ENCODE measurements at regions of chr13 and their contacts with region 1.

Region 1: DNA sequence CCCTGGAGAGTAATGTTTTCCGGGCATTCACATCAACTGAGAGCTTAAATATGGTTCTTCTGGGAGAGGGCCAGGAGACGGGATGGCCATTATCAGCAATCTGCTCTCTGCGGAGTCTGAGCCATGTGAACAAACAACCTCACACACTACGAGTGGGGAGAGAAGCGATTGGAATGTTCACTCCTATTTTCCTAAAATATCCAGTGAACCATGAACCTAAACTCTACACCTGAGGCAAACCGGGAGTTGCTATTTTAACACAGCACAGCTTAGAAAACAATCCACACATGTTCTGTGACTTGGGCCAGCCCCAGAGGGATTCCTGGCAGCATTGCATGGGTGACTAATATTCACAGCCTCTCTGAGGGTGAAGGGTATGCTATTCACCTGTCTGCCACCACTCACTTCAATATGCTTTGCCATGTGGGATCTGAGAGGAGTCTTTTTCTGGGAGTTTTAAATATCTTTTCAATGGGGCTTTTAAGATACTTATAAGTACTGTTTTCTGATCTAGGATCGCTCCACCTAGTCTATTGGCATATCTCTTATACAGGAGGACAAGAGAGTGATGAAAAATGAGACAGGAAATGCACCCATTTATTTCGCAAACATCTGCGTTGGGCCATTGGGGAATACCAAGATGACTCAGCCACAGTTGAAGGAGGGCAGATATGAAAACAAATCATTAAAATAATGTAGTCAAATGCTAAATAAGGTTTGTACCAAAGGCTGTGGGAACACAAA is 72.6 kb upstream of the SERP2 start:
- DNase-seq: peak; percentile 75
- H3K4me3 ChIP-seq: no peak overlapping the region
- H3K27ac ChIP-seq: peak overlapping the region; percentile 68 to 90 (median 82)
- H3K4me1 ChIP-seq: peaks cover 0 to 77% (median 64%) of the 10 kb centered on the region in 4 donors
- H3K27me3 ChIP-seq: no peaks in the 10 kb centered on the region
- CTCF ChIP-seq: no peak
- EP300 ChIP-seq: peak in 2 of 4 donors; percentile 33 to 39
- POLR2A ChIP-seq: no peak

Region 2: GRCh38 chr13:44141725-44142539 is 159.1 kb before region 1 on chr13:
- intact Hi-C with region 1: loop called (anchors 5 kb)
- DNase-seq: peak; percentile 99
- H3K4me3 ChIP-seq: peak overlapping the region; percentile 43 to 57 (median 52)
- H3K27ac ChIP-seq: peak overlapping the region; percentile 86 to 95 (median 90)
- H3K4me1 ChIP-seq: peaks cover 0 to 17% (median 10%) of the 10 kb centered on the region in 4 donors
- H3K27me3 ChIP-seq: no peaks in the 10 kb centered on the region
- CTCF ChIP-seq: peak in 1 of 4 experiments; percentile 32
- EP300 ChIP-seq: no peak
- POLR2A ChIP-seq: peak; percentile 91 to 93

Region 3: GRCh38 chr13:44274452-44275205 is 26.4 kb before region 1 on chr13:
- intact Hi-C with region 1: loop called (anchors 1 kb)
- DNase-seq: no peak
- H3K4me3 ChIP-seq: peak overlapping the region in 2 of 4 donors; percentile 12
- H3K27ac ChIP-seq: peak overlapping the region; percentile 81 to 87 (median 84)
- H3K4me1 ChIP-seq: peaks cover 0 to 80% (median 70%) of the 10 kb centered on the region in 4 donors
- H3K27me3 ChIP-seq: no peaks in the 10 kb centered on the region
- CTCF ChIP-seq: no peak
- EP300 ChIP-seq: peak; percentile 30 to 94 (median 88)
- POLR2A ChIP-seq: no peak

Region 4: GRCh38 chr13:44373601-44374348 is 72.7 kb after region 1 on chr13 and contains the start of gene SERP2:
- intact Hi-C with region 1: loop called (anchors 5 kb)
- DNase-seq: peak; percentile 76
- H3K4me3 ChIP-seq: peak within 1 kb of the TSS; percentile 41 to 74 (median 58)
- H3K27ac ChIP-seq: peak within 1 kb of the TSS; percentile 48 to 75 (median 64)
- H3K4me1 ChIP-seq: peaks cover 0 to 23% (median 14%) of the 10 kb centered on the region in 4 donors
- H3K27me3 ChIP-seq: no peaks in the 10 kb centered on the region
- CTCF ChIP-seq: no peak
- EP300 ChIP-seq: no peak
- POLR2A ChIP-seq: no peak
- total RNA-seq, gene SERP2: 6.9 to 9.6 (median 8.6) TPM

Region 5: GRCh38 chr13:44396701-44397580 is 95.9 kb after region 1 on chr13:
- intact Hi-C with region 1: no loop called
- DNase-seq: peak; percentile 61
- H3K4me3 ChIP-seq: no peak overlapping the region
- H3K27ac ChIP-seq: peak overlapping the region; percentile 5 to 43 (median 22)
- H3K4me1 ChIP-seq: peaks cover 0 to 5% (median 0%) of the 10 kb centered on the region in 4 donors
- H3K27me3 ChIP-seq: no peaks in the 10 kb centered on the region
- CTCF ChIP-seq: no peak
- EP300 ChIP-seq: no peak
- POLR2A ChIP-seq: no peak

Region 6: DNA sequence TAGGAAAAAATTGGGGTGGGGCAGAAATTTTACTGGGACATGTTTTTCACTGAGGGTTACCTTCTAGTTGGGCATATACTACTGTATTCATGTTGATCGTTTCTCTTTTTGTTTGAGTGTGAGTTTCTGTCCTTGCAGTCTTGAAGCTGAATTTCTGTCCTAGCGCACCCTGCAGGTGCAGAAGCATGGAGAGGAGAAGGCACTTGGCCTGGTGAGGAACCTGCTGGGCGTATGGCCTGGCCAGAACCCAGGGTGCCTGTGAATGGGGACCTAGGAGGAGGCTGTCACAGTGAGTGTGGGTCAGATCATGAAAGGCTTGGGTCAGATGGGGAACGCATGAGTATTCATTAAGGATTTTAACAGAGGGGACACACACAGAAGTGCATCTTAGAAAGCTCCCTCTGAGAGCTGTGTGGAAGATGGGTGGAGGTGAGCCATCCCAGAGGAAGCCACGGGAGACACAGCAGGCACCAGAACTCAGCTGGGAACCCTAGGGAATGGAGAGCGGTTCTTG is 109.3 kb after region 1 on chr13:
- intact Hi-C with region 1: no loop called
- DNase-seq: no peak
- H3K4me3 ChIP-seq: no peak overlapping the region
- H3K27ac ChIP-seq: no peak overlapping the region
- H3K4me1 ChIP-seq: no peaks in the 10 kb centered on the region
- H3K27me3 ChIP-seq: no peaks in the 10 kb centered on the region
- CTCF ChIP-seq: no peak
- EP300 ChIP-seq: no peak
- POLR2A ChIP-seq: no peak

Measured in sigmoid colon (tissue), 7 donors.